ENCODE measurements at regions of chr1 and their contacts with region 1.

Region 1: GRCh38 chr1:210407207-210407886 is 78.6 kb downstream of the HHAT start:
- DNase-seq: peak; percentile 80
- H3K4me3 ChIP-seq: no peak overlapping the region
- H3K27ac ChIP-seq: no peak overlapping the region
- H3K4me1 ChIP-seq: no peaks in the 10 kb centered on the region
- H3K27me3 ChIP-seq: peaks cover 3% of the 10 kb centered on the region
- CTCF ChIP-seq: peak; percentile 98

Region 2: DNA sequence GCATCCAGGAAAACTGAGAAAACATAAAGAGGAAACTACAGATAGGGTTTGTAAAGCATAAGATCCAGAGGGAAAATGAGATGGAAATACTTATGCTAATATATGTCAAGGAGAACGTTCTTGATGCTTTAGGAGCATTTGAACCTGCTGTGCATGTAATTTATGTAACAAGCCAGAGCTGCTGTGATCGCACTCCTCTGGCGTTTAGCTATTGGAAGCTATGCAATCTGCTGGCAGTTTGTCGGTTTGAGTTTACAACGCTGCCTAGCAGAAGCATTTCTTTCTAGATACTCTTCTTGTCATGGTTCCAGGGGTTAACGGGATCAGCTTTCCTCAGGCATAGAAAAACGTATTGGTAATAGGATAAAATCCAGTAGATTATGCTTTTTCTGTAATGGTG is 543.9 kb after region 1 on chr1:
- CTCF ChIA-PET with region 1: no interaction called
- POLR2A ChIA-PET with region 1: no interaction called
- intact Hi-C with region 1: no loop called
- DNase-seq: peak; percentile 12
- H3K4me3 ChIP-seq: no peak overlapping the region
- H3K27ac ChIP-seq: no peak overlapping the region
- H3K4me1 ChIP-seq: no peaks in the 10 kb centered on the region
- H3K27me3 ChIP-seq: peaks cover 15% of the 10 kb centered on the region
- CTCF ChIP-seq: no peak

Region 3: DNA sequence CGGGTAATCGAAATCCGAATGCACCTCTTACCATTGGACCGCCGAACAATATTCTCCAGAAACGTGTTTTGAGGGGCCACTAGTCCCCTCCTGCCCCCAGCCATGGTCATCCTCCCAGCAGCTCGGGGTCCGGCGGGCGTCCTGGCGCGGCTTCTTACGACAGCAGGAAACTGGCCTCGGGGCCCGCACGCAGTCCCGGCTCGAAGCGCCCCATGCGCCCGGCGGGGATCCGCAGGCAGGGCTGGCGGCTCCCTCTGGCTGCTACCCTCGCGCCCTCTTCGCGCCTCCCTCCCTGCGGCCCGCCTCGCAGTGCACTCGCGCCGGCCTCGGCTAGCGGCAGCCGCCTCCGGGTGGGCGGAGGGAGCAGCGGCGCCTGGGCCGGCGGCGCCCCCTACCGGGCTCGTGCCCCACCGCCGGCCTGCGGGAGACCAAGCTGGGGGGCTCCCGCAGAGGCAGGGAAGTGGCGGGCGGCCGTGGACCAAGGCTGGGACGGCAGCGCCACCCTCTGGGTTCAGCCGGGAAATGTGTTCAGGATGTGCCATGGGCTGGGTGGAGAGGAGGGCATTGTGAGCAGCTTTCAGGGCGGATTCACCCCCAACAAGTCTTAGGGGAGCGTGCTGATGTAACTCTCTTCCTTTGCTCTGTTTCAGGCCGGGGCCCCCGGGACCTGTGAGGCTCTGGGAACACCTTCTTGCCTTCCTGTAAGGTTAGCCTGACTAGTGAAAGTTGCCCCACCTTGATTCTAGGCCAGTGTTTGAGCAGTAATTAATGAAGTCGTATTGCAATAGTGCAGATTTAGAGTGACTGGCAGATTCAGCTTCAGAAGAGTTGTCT is 726.7 kb after region 1 on chr1 and contains the start of gene KCNH1:
- CTCF ChIA-PET with region 1: interaction called, 8 read pairs
- POLR2A ChIA-PET with region 1: no interaction called
- intact Hi-C with region 1: loop called (anchors 1 kb)
- DNase-seq: peak; percentile 91
- H3K4me3 ChIP-seq: peak within 1 kb of the TSS; percentile 28
- H3K27ac ChIP-seq: no peak within 1 kb of the TSS
- H3K4me1 ChIP-seq: peaks cover 9% of the 10 kb centered on the region
- H3K27me3 ChIP-seq: peaks cover 76% of the 10 kb centered on the region
- CTCF ChIP-seq: peak; percentile 85
- total RNA-seq, gene KCNH1: not detected in 2 replicates

Measured in A673 (cell line).